OCI-LY7 (cell line): ENCODE measurements at regions of chrX and their contacts with region 1.

Region 1: GRCh38 chrX:119981286-119982070 is 37.9 kb upstream of the NKAP start:
- DNase-seq: peak; percentile 65
- H3K4me3 ChIP-seq: no peak overlapping the region
- H3K27ac ChIP-seq: no peak overlapping the region
- H3K4me1 ChIP-seq: no peaks in the 10 kb centered on the region
- CTCF ChIP-seq: peak; percentile 78

Region 2: DNA sequence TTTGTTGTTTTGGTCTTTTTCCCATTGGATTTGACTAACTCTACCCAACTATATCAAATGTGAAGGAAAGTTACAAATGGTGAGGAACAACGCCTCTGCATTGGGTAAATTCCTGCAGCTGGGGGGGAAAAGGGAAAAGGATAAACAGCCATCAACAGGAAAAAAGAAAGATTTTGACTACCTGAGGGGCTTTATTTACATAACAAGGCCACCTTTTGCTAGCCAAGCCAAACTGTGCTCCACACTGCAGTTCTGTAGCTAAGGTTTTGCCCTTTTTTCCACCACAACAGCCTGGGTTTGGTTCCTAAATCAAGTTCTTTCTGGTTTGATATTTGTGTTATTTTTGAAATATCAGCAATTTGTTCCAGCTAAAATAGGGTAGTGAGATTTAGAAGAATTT is 55.2 kb after region 1 on chrX:
- CTCF ChIA-PET with region 1: no interaction called
- POLR2A ChIA-PET with region 1: no interaction called
- intact Hi-C with region 1: loop called (anchors 10 kb)
- DNase-seq: no peak
- H3K4me3 ChIP-seq: peak overlapping the region; percentile 71
- H3K27ac ChIP-seq: peak overlapping the region; percentile 85
- H3K4me1 ChIP-seq: peaks cover 37% of the 10 kb centered on the region
- CTCF ChIP-seq: no peak

Region 3: DNA sequence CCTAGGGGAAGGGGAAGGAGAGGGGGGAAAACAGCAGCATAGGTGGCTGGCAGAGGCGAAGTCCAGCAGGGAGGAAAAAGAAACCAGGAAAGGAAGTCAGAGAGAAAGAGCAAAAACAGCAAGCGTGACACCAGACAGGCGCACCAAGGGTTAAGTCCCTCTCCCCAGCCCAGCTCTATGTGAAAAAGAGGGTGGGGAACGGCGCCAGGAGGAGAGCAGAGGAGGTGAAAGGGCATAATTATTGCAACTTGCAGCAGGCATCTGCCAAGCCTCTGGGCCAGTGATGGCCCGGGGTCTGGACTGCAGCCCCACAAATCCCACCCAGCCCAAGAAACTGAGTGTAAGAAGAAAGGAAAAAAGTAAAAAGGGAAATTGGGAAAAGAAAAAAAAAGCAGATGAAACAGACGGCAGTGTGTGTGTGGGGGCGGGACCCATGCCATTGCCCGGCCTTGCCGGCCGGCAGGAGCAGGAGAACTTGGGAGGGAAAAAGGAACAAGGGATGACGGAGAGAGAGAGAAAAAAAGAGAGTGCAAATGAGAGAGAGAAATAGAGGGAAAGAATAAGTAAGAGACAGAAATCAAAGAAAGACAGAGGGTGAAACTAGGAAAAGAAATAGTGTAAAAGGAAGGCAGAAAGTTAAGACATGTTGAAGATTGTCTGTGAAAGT is 162.8 kb after region 1 on chrX:
- CTCF ChIA-PET with region 1: no interaction called
- POLR2A ChIA-PET with region 1: no interaction called
- intact Hi-C with region 1: loop called (anchors 10 kb)
- DNase-seq: no peak
- H3K4me3 ChIP-seq: no peak overlapping the region
- H3K27ac ChIP-seq: no peak overlapping the region
- H3K4me1 ChIP-seq: no peaks in the 10 kb centered on the region
- CTCF ChIP-seq: no peak